Activated CD4-positive, alpha-beta memory T cell treated with anti-CD3 and anti-CD28 coated beads, Interleukin-2, amount 10 ng/mL, durations not matched to agents 7 days and 5 days (primary cell): ENCODE measurements at regions of chr17 and their contacts with region 1.

Region 1: DNA sequence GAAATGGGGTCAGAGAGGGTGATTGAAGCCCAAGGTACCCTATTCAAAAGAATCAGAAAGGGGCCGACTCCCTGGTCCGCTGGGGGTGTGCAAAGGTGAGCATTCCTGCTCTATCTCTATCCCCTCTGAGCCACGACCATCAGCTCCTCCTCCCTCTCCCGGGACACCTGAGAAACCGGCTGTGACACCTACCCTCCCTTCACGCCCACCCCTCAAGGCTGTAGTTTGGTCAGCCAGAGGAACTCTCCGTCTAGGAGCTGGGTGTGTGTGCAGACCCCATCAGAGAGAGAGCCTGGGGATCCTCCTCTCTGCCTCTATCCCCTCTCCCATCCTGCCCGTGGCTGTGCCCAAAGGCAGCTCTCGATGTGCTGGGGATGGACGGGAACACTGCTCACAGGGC is 27.6 kb upstream of the DLX4 start:
- DNase-seq: no peak
- H3K4me3 Mint-ChIP-seq: no peak overlapping the region
- H3K27ac Mint-ChIP-seq: no peak overlapping the region
- H3K4me1 Mint-ChIP-seq: no peaks in the 10 kb centered on the region
- H3K27me3 Mint-ChIP-seq: peaks cover 42% of the 10 kb centered on the region

Region 2: GRCh38 chr17:49763735-49764558 is 177.5 kb before region 1 on chr17 and contains the start of gene FAM117A:
- CTCF ChIA-PET with region 1: no interaction called
- POLR2A ChIA-PET with region 1: no interaction called
- DNase-seq: peak; percentile 99
- H3K4me3 Mint-ChIP-seq: peak within 1 kb of the TSS; percentile 93
- H3K27ac Mint-ChIP-seq: peak within 1 kb of the TSS; percentile 78
- H3K4me1 Mint-ChIP-seq: peaks cover 54% of the 10 kb centered on the region
- H3K27me3 Mint-ChIP-seq: peaks cover 31% of the 10 kb centered on the region
- total RNA-seq, gene FAM117A: 61.0 to 62.0 TPM

Region 3: DNA sequence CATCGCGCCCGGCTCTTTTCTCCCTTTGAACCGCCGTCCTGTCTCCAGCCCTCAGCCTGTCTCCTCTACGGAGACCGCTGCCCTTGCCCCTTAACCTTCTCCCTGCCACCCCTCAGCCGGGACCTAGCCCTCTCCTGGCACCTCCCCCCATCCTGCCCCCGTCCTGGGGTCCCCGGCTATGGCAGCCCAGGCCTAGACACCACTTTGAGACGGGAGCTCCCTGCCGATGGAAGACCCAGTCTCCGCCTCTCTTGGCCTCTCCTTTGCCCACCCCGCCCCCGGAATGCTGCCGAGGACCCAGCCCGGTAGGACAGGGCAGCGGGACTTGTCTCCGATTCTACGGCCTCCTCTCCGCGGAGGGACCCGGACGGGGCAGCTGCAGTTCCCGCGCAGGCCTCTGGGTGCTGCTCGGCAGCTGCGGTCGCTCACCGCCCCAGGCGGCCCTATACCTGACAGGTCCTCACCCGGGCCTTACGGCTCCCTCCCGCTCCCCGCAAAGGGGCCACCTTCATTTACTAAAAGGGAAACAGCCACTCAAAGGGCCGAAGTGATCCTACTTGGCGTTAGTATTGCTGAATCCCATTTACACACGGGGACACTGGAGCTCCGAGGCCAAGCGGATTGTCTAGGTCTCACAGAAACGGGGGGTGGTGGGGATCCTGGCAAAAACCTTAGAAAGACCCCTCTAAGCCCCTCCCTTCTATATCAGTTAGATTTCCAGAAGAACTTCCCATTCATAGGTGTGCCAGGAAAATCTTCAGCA is 61.0 kb before region 1 on chr17:
- CTCF ChIA-PET with region 1: no interaction called
- POLR2A ChIA-PET with region 1: no interaction called
- DNase-seq: peak; percentile 78
- H3K4me3 Mint-ChIP-seq: no peak overlapping the region
- H3K27ac Mint-ChIP-seq: no peak overlapping the region
- H3K4me1 Mint-ChIP-seq: peaks cover 4% of the 10 kb centered on the region
- H3K27me3 Mint-ChIP-seq: peaks cover 30% of the 10 kb centered on the region

Region 4: GRCh38 chr17:49952209-49952911 is 10.9 kb after region 1 on chr17:
- CTCF ChIA-PET with region 1: interaction called, 12 read pairs
- POLR2A ChIA-PET with region 1: no interaction called
- DNase-seq: peak; percentile 83
- H3K4me3 Mint-ChIP-seq: no peak overlapping the region
- H3K27ac Mint-ChIP-seq: no peak overlapping the region
- H3K4me1 Mint-ChIP-seq: no peaks in the 10 kb centered on the region
- H3K27me3 Mint-ChIP-seq: peaks cover 41% of the 10 kb centered on the region